HEK293T (cell line): ENCODE measurements at regions of chr1 and their contacts with region 1.

Region 1: DNA sequence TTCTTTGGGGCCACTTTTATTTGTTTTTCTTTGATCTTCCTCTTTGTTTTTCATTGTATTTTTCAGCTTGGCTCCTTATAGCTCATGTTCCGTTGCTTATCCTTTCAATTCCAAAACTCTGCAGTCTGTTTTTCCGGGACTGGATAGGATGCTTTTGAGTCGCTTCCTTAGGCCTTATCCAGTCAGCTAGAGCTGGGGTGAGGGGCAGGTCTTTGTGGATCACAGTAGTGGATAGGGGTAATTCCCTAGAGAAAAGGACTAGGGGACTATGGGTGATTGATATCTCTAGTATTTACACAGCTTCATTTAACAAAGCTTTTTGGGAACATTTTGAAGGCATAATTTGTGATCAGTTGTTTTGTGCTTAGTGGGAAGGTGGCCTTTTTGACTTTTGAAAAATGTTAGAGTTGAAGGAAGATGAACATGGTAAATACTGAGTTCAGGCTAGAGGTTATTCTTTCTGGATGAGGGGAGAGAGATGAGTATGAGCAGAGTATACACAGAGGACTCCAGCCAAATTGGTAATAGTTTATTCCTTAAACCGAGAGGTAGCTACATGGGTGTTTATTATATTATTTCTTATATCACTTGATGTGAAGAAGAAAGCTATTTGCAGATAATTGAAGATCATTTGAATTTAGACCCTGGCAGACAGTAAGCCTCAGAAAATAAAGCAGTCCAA is 22.5 kb downstream of the CEP350 start:
- DNase-seq: no peak

Region 2: GRCh38 chr1:179809506-179810366 is 167.4 kb before region 1 on chr1:
- CTCF ChIA-PET with region 1: no interaction called
- POLR2A ChIA-PET with region 1: no interaction called
- DNase-seq: peak; percentile 85

Region 3: DNA sequence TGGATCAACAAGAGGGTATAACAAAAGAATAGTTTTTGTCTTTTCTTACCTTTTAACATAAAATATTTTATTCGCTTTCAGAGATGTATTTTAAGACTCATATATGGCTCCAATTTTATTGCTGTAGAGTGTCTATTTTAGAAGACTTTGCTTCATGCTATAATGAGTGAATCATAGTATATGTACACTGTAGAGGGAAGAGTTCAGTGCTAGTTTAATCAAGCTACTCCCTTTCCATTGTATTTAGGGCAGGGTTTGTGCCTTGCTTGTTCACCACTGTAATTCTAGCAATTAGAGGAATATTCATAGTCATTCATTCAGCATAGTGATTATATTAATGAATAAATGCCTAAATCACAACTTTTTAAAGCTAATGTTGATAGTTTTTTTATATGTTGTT is 56.3 kb after region 1 on chr1:
- CTCF ChIA-PET with region 1: no interaction called
- POLR2A ChIA-PET with region 1: no interaction called
- DNase-seq: no peak

Region 4: GRCh38 chr1:180065811-180066549 is 88.9 kb after region 1 on chr1:
- CTCF ChIA-PET with region 1: no interaction called
- POLR2A ChIA-PET with region 1: no interaction called
- DNase-seq: no peak

Region 5: DNA sequence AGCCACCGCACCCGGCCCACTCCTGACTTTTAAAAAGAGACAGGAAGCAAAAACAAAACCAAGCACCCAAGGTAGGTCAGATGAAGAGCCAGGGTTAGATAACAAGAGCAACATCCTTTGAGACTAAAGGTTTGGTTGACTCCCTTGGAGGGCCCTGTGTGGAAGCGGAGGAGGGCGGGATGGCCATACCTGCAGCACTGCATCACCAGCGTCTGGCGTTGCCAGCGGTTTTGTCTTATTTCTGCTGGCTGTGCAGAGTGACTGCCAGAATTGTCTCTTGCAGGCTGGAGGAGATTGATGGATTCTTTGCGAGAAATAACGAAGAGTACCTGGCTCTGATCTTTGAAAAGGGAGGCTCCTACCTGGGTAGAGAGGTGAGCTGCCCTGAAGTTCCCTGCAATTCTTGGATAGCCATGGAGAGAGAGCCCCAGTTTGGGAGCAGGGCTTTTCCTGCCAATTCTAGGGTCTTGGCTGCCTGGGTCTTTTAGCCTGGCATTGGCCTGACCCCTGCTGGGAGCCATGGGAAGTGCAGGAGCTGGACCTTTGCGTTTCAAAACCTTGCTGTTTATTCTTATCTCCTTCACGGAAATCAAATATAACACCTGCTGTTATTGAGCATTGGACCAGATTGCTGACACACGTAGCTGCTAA is 201.5 kb after region 1 on chr1:
- CTCF ChIA-PET with region 1: no interaction called
- POLR2A ChIA-PET with region 1: no interaction called
- DNase-seq: peak; percentile 88

Region 6: DNA sequence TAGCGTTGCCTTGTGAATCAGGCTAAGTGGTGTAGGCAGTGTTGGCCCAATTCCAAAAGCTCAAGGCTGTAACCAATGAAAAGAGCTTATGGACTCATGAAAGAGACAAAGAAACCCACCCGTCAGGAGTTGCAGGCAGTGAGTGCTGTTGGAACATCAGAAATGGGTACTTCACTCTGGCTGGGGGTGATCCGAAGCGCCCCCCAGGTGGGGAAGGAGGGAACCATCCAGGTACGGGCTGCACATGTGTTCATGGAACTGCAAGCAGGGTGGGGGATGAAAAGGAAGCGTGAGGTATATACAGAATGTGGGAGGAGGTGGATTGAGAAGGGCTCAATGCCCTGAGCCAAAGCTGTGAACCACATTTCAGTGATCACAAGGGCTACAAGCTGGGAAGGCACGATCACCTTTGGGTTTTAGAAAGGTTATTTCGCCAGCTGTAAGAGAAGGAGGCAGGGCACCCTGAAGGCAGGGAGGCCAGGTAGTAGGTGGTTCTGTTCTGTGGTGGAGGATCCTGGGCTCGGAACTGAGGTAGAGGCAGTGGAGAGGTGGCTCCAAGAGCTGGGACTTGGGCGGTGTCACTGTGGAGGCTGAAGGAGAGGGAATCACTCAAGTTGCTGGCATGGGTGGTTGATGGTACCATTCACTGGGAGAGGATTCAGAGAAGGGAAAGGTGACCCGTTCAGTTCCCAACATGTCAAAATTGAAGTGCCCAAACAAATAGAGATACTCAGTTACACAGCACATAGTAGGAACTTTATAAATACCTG is 924.3 kb after region 1 on chr1:
- CTCF ChIA-PET with region 1: interaction called, 10 read pairs
- POLR2A ChIA-PET with region 1: no interaction called
- DNase-seq: no peak